ENCODE measurements at regions of chr1 and their contacts with region 1.

Region 1: DNA sequence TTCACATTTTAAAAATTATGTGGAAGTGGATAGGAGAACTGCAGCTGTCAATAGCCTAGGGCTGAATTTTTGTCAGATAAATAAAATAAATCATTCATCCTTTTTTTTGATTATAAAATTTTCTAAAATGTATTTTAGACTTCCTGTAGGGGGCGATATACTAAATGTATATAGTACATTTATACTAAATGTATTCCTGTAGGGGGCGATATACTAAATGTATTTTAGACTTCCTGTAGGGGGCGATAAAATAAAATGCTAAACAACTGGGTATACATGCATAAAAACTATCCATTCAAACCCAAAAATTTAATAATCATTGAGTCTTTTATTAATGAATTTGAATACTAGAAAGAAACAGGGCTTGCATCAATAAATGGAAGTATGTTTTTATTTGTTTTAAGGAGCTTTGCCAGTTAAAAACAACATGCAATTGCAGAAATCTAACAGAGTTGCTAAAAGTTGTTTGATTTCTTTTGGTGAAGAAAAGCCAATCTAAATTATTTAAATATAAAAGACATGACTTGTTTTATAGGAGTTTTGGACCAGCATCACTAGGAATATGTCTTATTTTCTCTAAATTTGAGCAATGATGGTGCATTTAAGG is 31.4 kb downstream of the CLCA1 start:
- DNase-seq: no peak
- H3K4me3 ChIP-seq: no peak overlapping the region
- H3K27ac ChIP-seq: no peak overlapping the region
- H3K4me1 ChIP-seq: peaks cover 17 to 42% (median 22%) of the 10 kb centered on the region in 3 donors
- H3K27me3 ChIP-seq: no peaks in the 10 kb centered on the region
- CTCF ChIP-seq: peak; percentile 76 to 97 (median 84)
- POLR2A ChIP-seq: no peak

Region 2: GRCh38 chr1:86380257-86380861 is 119.7 kb before region 1 on chr1:
- intact Hi-C with region 1: loop called (anchors 10 kb)
- DNase-seq: no peak
- H3K4me3 ChIP-seq: peak overlapping the region in 1 of 4 donors; percentile 16
- H3K27ac ChIP-seq: no peak overlapping the region
- H3K4me1 ChIP-seq: peaks cover 0 to 7% (median 0%) of the 10 kb centered on the region in 3 donors
- H3K27me3 ChIP-seq: no peaks in the 10 kb centered on the region
- CTCF ChIP-seq: peak; percentile 53 to 86 (median 76)
- POLR2A ChIP-seq: no peak